ENCODE measurements at regions of chr1 and their contacts with region 1.

Region 1: GRCh38 chr1:51359879-51360278 is 29.5 kb upstream of the TTC39A start:
- DNase-seq: no peak
- H3K4me3 ChIP-seq: no peak overlapping the region
- H3K27ac ChIP-seq: no peak overlapping the region
- H3K4me1 ChIP-seq: no peaks in the 10 kb centered on the region
- H3K27me3 ChIP-seq: no peaks in the 10 kb centered on the region
- CTCF ChIP-seq: no peak

Region 2: DNA sequence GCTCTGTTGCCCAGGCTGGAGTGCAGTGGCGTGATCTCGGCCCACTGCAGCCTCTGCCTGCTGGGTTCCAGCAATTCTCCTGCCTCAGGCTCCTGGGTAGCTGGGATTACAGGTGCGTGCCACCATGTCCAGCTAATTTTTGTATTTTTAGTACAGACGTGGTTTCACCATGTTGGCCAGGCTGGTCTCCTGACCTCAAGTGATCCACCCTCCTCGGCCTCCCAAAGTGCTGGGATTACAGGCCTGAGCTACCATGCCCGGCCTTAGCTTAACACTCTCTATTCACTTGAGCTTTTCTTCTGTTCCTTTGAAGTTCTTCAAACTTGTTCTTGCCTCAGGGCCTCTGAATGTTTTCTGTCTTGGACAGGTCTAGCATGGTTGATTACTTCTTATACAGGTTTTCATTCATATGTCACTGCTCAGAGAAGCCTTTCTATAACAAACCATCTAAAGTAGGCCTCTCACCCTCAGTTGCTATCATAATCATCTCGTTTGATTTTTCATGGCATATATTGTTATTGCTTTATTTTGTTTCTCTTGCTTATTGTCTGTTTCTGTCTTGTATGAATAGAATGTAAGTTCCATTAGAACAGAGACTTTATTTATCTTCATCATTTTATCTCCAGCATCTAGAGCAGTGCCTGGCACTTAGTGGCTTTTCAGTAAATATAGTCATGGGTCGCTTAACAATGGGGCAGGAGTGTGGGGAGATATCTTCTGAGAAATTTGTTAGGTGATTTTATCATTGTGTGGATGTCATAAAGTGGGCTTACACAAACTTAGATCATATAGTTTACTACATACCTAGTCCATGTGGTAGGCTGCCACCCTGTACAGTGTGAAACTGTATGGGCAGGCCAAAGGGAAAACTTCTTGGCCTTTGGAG is 269.1 kb after region 1 on chr1:
- CTCF ChIA-PET with region 1: no interaction called
- POLR2A ChIA-PET with region 1: interaction called, 22 read pairs
- intact Hi-C with region 1: no loop called
- DNase-seq: no peak
- H3K4me3 ChIP-seq: no peak overlapping the region
- H3K27ac ChIP-seq: peak overlapping the region; percentile 17; the same call in 1 of the 2 replicates
- H3K4me1 ChIP-seq: peaks cover 20% of the 10 kb centered on the region
- H3K27me3 ChIP-seq: no peaks in the 10 kb centered on the region
- CTCF ChIP-seq: no peak

Region 3: DNA sequence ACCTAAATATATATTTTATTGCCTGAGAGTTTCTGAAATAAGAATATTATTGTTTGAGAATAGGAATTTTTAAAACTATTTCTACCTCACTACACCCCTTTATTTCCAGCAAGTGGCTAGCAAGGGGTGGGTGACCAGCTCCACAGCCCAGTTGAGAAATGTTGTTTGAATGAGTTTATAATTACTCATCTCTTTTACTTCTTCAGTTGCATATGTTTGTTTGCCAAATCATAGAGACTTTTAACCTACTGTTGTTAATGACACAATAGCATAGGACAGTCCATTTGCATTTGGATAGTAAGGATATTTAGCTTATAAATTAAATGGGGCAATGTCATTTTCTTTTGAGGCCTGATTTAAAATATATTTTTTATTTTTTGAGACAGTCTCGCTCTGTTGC is 390.9 kb after region 1 on chr1:
- CTCF ChIA-PET with region 1: no interaction called
- POLR2A ChIA-PET with region 1: no interaction called
- intact Hi-C with region 1: no loop called
- DNase-seq: peak in 1 of 2 experiments; percentile 57
- H3K4me3 ChIP-seq: no peak overlapping the region
- H3K27ac ChIP-seq: peak overlapping the region; percentile 38; the same call in 1 of the 2 replicates
- H3K4me1 ChIP-seq: peaks cover 22% of the 10 kb centered on the region
- H3K27me3 ChIP-seq: no peaks in the 10 kb centered on the region
- CTCF ChIP-seq: no peak

Measured in PC-9 (cell line).